Common myeloid progenitor, CD34-positive (primary cell): ENCODE measurements at regions of chr9 and their contacts with region 1.

Region 1: DNA sequence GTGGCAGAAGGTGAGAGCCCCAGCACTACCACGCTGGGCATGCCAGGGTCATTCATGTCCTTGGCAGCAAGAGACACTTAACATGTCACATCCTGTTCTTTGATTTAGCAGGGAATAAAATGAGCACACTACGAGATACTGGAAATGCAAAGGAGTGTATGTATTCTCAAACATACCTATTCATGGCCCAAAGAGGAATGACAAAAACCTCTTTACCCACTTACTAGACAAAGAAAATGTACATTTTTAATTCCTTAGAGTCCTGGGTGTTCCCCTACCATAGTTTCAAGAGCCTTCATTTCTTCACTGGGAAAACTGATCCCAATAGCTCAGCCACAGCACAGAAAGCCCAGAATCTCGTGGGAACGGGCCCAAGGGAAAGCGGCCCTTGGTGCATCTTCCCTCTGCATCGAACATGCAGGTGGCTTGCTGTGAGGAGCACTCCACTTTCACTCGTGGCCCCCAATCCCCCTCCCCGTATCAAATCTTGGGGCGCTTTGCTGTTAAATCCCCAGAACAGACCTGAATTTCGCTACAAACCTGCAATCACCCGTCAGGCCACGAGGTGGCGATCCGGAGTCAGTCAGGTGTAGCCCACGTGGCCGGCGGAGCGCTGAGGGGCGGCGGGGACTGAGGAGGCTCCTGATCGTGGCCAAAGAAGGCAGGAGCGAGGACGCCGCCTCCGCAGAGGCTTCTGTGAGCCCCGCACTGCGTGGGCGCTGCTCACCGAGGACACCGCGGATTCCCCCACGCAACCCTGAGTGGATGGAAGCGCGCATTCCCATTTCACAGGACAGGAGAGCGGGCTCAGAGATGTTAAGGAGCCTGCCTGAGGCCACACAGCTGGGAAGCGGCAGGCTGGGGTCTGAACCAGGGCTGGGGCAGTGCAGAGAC is 91.4 kb downstream of the LMX1B start:
- DNase-seq: peak; percentile 76 to 88 (median 83)
- H3K4me3 ChIP-seq: peak overlapping the region in 3 of 7 experiments; percentile 7 to 26 (median 22)
- H3K27ac ChIP-seq: no peak overlapping the region
- H3K4me1 ChIP-seq: peaks cover 0 to 21% (median 15%) of the 10 kb centered on the region in 4 experiments
- H3K27me3 ChIP-seq: peaks cover 0 to 25% (median 2%) of the 10 kb centered on the region in 5 experiments

Region 2: DNA sequence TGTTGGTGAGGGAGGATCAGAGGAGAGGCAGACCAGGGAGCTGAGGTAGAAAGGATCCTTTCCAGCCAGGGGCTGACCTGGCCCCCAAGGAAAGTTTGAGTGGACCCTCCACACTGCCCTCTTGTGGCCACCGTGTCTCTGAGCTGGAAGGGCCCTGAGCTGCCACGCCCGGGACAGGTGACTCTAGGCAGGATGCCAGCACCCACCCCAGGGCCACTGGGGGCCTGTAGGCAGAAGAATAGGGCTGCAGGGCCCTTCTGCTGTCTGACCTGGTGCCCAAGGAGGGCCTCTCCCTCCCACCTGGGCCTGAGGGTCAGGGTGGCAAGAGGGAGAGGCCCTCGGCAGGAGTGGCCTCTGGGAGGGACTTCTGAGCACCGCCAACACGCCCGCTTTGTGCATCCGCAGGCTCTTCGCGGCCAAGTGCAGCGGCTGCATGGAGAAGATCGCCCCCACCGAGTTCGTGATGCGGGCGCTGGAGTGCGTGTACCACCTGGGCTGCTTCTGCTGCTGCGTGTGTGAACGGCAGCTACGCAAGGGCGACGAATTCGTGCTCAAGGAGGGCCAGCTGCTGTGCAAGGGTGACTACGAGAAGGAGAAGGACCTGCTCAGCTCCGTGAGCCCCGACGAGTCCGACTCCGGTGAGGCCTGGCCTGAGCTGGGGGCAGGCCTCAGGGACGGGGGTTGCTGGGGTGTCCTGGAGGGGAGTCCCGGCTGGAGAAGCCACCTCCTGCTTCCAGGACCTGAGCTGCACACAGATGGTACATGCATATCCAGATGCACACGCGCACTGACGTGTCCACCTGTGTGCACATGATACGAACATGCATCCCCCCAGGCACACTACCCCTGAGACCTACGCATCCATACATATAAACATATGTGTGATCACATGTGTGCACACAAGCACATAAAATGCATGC is 14.4 kb before region 1 on chr9:
- CTCF ChIA-PET with region 1: interaction called, 23 read pairs
- POLR2A ChIA-PET with region 1: no interaction called
- DNase-seq: peak; percentile 36 to 64 (median 52)
- H3K4me3 ChIP-seq: no peak overlapping the region
- H3K27ac ChIP-seq: no peak overlapping the region
- H3K4me1 ChIP-seq: no peaks in the 10 kb centered on the region
- H3K27me3 ChIP-seq: peaks cover 1 to 53% (median 9%) of the 10 kb centered on the region in 5 experiments

Region 3: DNA sequence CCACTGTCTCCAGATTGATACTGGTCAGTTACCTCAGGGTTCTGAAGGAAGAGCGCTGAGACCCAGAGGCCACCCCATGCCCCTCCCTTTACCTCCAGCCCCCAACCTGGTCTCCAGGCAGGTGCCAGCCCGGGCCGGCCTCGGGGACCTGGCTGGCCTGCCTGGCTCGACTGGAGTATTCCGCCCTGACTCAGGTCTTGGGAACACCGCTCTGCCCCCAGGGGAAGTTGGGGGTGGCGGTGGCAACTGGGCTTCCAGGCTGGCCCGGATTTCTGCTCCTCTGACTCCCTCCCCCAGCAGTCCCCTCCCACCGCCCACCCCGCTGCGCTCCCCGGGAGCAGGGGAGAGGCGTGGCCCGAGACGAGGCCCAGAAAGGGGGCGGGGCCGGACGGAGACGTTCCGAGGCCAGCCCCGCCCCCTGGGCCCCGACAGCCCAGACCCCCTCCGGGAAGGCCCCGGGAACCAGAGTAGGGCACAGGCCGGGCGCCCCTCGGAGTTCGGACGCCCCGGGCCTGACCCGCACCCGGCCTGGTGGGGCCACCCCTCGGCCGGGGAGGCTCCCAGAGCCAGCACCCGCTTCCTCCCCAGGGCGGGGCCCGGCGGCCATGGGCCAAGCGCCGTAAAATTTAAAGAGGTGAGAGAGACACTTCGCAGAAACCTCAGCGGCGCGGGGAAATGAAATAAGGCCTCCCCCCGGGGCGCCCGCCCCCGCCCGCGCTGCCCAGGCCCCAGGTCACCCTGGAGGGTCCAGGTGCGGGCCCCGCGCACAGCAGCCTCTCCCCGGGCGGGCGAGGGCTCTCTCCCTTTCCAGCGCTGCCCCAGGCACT is 17.3 kb after region 1 on chr9:
- CTCF ChIA-PET with region 1: interaction called, 46 read pairs
- POLR2A ChIA-PET with region 1: no interaction called
- DNase-seq: peak; percentile 77 to 83 (median 81)
- H3K4me3 ChIP-seq: peak overlapping the region; percentile 50 to 85 (median 68)
- H3K27ac ChIP-seq: peak overlapping the region; percentile 64 to 84
- H3K4me1 ChIP-seq: peaks cover 3 to 47% (median 41%) of the 10 kb centered on the region in 4 experiments
- H3K27me3 ChIP-seq: no peaks in the 10 kb centered on the region

Region 4: DNA sequence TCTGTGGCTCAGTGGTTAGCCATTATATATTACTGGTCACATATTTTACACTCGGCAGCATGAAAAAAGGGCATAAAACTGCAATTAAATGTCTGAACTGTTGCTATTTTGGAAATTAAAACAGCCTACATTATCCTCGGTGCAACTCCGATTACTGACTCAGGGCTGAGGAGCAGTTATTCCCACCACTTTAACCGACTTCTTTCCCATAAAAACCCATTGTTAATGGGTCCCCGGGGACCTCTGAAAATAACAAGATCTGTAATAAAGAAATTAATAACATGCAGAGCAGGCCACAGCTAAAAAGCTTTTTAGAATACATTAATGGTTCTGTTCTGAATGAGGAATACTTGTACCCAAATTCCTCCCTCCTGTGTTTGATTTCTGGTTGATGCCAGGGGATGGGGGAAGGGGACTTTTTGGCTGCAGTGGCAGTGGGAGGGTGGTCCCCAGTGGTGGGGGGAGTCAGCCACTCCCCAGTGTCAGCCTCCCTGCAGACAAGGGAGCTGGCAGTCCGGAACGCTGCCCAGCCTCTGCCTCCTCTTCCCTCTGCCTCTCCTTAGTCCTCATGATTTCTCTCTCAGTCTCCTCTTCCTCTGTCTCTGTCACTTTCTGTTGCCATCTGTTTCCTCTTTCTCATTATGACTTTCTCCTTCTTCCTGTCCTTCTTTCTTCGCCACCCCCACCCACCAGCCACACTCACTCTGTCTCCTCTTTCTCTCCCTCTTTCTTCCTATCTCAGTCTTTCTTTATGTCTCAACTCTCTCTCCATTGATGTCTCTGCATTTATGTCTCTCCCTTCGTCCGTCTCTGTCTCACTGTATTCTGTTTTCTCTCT is 40.7 kb after region 1 on chr9:
- CTCF ChIA-PET with region 1: interaction called, 60 read pairs
- POLR2A ChIA-PET with region 1: no interaction called
- DNase-seq: peak in 2 of 3 donors; percentile 42 to 64
- H3K4me3 ChIP-seq: peak overlapping the region in 2 of 7 experiments; percentile 8 to 36
- H3K27ac ChIP-seq: no peak overlapping the region
- H3K4me1 ChIP-seq: peaks cover 0 to 44% (median 37%) of the 10 kb centered on the region in 4 experiments
- H3K27me3 ChIP-seq: no peaks in the 10 kb centered on the region

Region 5: DNA sequence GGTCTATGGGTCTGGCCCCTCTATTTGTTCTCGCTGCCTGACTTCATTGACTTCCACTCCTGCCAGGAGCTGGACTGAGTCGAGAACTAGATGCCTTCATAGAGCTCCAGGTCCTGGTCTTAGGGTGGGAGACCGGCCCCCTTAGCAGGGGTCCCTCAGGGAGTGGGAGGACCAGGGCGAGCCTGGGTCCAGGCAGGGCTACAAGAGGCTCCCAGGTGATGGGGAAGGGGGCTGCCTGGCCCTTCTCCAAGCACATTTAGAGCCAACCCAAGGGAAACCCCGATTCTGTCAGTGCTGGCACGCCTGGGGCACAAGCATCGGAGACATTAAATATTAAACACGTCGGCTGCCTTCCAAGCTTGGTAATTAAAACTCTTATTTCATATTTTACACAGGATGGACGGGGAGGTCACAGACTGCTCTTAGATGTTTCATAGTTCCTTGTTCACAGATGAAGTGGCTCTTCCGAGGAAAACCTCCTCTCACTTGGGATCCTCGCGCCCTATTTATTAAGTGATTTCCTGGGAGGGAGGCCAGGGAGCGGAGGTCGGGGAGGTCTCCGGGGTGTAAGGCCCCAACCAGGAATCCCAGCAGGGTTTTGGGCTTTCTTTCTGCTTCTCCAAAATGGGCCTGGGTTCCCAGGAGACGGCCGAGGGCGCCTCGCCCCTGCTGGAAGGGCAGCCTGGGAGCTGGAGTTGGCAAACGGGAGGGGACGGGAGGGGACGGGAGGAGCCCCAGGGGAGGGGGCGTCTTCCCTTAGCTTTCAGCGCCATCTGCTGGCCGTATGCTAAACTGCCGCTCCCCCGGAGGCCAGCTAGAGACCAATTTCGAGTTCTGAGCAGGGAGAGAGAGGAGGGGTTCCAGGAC is 76.3 kb after region 1 on chr9:
- CTCF ChIA-PET with region 1: interaction called, 397 read pairs
- POLR2A ChIA-PET with region 1: interaction called, 3 read pairs
- DNase-seq: peak; percentile 67 to 75 (median 69)
- H3K4me3 ChIP-seq: no peak overlapping the region
- H3K27ac ChIP-seq: no peak overlapping the region
- H3K4me1 ChIP-seq: no peaks in the 10 kb centered on the region
- H3K27me3 ChIP-seq: peaks cover 0 to 5% (median 2%) of the 10 kb centered on the region in 5 experiments